CD8-positive, alpha-beta T cell (primary cell): ENCODE measurements at regions of chr14 and their contacts with region 1.

Region 1: GRCh38 chr14:61342486-61342885 is 21.1 kb downstream of the PRKCH start:
- DNase-seq: peak; percentile 60 to 94 (median 85)
- ATAC-seq: peak; percentile 49
- H3K4me3 ChIP-seq: peak overlapping the region in 1 of 2 experiments; percentile 25
- H3K4me3 Mint-ChIP-seq: peak overlapping the region; percentile 77
- H3K27ac ChIP-seq: peak overlapping the region; percentile 39 to 77
- H3K27ac Mint-ChIP-seq: peak overlapping the region; percentile 99
- H3K4me1 ChIP-seq: peaks cover 94% of the 10 kb centered on the region
- H3K4me1 Mint-ChIP-seq: peaks cover 95% of the 10 kb centered on the region
- H3K27me3 ChIP-seq: no peaks in the 10 kb centered on the region
- H3K27me3 Mint-ChIP-seq: no peaks in the 10 kb centered on the region
- CTCF ChIP-seq: no peak

Region 2: GRCh38 chr14:61203081-61203753 is 139.3 kb before region 1 on chr14:
- CTCF ChIA-PET with region 1: no interaction called
- POLR2A ChIA-PET with region 1: no interaction called
- intact Hi-C with region 1: no loop called
- DNase-seq: no peak
- ATAC-seq: no peak
- H3K4me3 ChIP-seq: no peak overlapping the region
- H3K4me3 Mint-ChIP-seq: no peak overlapping the region
- H3K27ac ChIP-seq: no peak overlapping the region
- H3K27ac Mint-ChIP-seq: no peak overlapping the region
- H3K4me1 ChIP-seq: no peaks in the 10 kb centered on the region
- H3K4me1 Mint-ChIP-seq: no peaks in the 10 kb centered on the region
- H3K27me3 ChIP-seq: peaks cover 0 to 2% of the 10 kb centered on the region in 2 experiments
- H3K27me3 Mint-ChIP-seq: peaks cover 16% of the 10 kb centered on the region
- CTCF ChIP-seq: no peak

Region 3: DNA sequence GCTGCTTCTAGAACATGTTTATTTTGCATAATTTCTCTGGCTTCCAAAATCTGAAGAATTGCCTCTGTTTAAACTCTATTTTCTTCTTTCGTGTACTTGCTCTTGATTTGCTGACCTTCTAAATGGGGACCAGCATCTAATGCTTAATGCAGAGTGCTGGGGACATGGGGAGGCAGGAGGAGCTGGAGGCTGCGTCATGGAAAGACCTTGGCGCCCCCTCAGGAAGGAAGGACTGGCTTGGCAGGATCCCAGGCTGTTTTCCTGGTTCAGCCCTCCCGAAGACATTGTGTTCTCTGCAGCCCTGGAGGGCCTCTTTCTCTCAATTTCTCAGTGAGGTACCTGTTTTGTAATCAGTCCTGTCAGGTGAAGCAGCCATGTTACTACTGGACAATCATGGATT is 15.6 kb before region 1 on chr14:
- CTCF ChIA-PET with region 1: interaction called, 16 read pairs
- POLR2A ChIA-PET with region 1: interaction called, 96 read pairs
- intact Hi-C with region 1: loop called (anchors 1 to 2 kb)
- DNase-seq: peak in 3 of 9 experiments; percentile 24 to 62 (median 25)
- ATAC-seq: no peak
- H3K4me3 ChIP-seq: peak overlapping the region; percentile 90 to 94
- H3K4me3 Mint-ChIP-seq: peak overlapping the region; percentile 96
- H3K27ac ChIP-seq: peak overlapping the region; percentile 51 to 86
- H3K27ac Mint-ChIP-seq: peak overlapping the region; percentile 96
- H3K4me1 ChIP-seq: peaks cover 65% of the 10 kb centered on the region
- H3K4me1 Mint-ChIP-seq: peaks cover 60% of the 10 kb centered on the region
- H3K27me3 ChIP-seq: no peaks in the 10 kb centered on the region
- H3K27me3 Mint-ChIP-seq: no peaks in the 10 kb centered on the region
- CTCF ChIP-seq: no peak

Region 4: GRCh38 chr14:61355892-61356325 is 13.4 kb after region 1 on chr14:
- CTCF ChIA-PET with region 1: interaction called, 4 read pairs
- POLR2A ChIA-PET with region 1: interaction called, 7 read pairs
- intact Hi-C with region 1: loop called in 1 of 2 experiments (anchors 1 kb)
- DNase-seq: peak in 5 of 9 experiments; percentile 37 to 69 (median 67)
- ATAC-seq: peak; percentile 69
- H3K4me3 ChIP-seq: no peak overlapping the region
- H3K4me3 Mint-ChIP-seq: peak overlapping the region; percentile 63
- H3K27ac ChIP-seq: peak overlapping the region in 1 of 2 experiments; percentile 77
- H3K27ac Mint-ChIP-seq: peak overlapping the region; percentile 84
- H3K4me1 ChIP-seq: peaks cover 95% of the 10 kb centered on the region
- H3K4me1 Mint-ChIP-seq: peaks cover 91% of the 10 kb centered on the region
- H3K27me3 ChIP-seq: no peaks in the 10 kb centered on the region
- H3K27me3 Mint-ChIP-seq: no peaks in the 10 kb centered on the region
- CTCF ChIP-seq: no peak